ENCODE measurements at regions of chr6 and their contacts with region 1.

Region 1: DNA sequence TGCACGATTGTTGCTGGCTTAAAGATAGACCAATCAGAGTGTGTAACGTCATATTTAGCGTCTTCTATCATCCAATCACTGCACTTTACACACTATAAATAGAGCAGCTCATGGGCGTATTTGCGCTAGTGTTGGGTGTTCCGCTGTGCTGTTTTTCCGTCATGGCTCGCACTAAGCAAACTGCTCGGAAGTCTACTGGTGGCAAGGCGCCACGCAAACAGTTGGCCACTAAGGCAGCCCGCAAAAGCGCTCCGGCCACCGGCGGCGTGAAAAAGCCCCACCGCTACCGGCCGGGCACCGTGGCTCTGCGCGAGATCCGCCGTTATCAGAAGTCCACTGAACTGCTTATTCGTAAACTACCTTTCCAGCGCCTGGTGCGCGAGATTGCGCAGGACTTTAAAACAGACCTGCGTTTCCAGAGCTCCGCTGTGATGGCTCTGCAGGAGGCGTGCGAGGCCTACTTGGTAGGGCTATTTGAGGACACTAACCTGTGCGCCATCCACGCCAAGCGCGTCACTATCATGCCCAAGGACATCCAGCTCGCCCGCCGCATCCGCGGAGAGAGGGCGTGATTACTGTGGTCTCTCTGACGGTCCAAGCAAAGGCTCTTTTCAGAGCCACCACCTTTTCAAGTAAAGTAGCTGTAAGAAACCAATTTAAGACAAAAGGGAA is 57.9 kb downstream of the TRIM38 start:
- DNase-seq: peak; percentile 63 to 94 (median 76)
- ATAC-seq: peak; percentile 49 to 67 (median 62)
- H3K4me3 ChIP-seq: peak overlapping the region; percentile 76 to 81
- H3K4me3 Mint-ChIP-seq: peak overlapping the region; percentile 85 to 99 (median 97)
- H3K27ac ChIP-seq: peak overlapping the region; percentile 93
- H3K27ac Mint-ChIP-seq: peak overlapping the region; percentile 99 to 100
- H3K4me1 ChIP-seq: peaks cover 13 to 37% of the 10 kb centered on the region in 2 experiments
- H3K4me1 Mint-ChIP-seq: peaks cover 30 to 38% (median 33%) of the 10 kb centered on the region in 3 donors
- H3K27me3 ChIP-seq: no peaks in the 10 kb centered on the region
- H3K27me3 Mint-ChIP-seq: no peaks in the 10 kb centered on the region

Region 2: GRCh38 chr6:24689964-24690363 is 1330.5 kb before region 1 on chr6:
- CTCF ChIA-PET with region 1: no interaction called
- POLR2A ChIA-PET with region 1: no interaction called
- DNase-seq: no peak
- ATAC-seq: no peak
- H3K4me3 ChIP-seq: no peak overlapping the region
- H3K4me3 Mint-ChIP-seq: no peak overlapping the region
- H3K27ac ChIP-seq: no peak overlapping the region
- H3K27ac Mint-ChIP-seq: no peak overlapping the region
- H3K4me1 ChIP-seq: peaks cover 0 to 2% of the 10 kb centered on the region in 2 experiments
- H3K4me1 Mint-ChIP-seq: peaks cover 8 to 15% (median 11%) of the 10 kb centered on the region in 3 donors
- H3K27me3 ChIP-seq: no peaks in the 10 kb centered on the region
- H3K27me3 Mint-ChIP-seq: no peaks in the 10 kb centered on the region

Region 3: GRCh38 chr6:25971187-25971811 is 49.2 kb before region 1 on chr6:
- CTCF ChIA-PET with region 1: no interaction called
- POLR2A ChIA-PET with region 1: interaction called in 1 of 2 experiments, 17 read pairs
- DNase-seq: no peak
- ATAC-seq: no peak
- H3K4me3 ChIP-seq: no peak overlapping the region
- H3K4me3 Mint-ChIP-seq: no peak overlapping the region
- H3K27ac ChIP-seq: no peak overlapping the region
- H3K27ac Mint-ChIP-seq: peak overlapping the region; percentile 27 to 39
- H3K4me1 ChIP-seq: peaks cover 2 to 17% of the 10 kb centered on the region in 2 experiments
- H3K4me1 Mint-ChIP-seq: peaks cover 51 to 70% (median 60%) of the 10 kb centered on the region in 3 donors
- H3K27me3 ChIP-seq: no peaks in the 10 kb centered on the region
- H3K27me3 Mint-ChIP-seq: no peaks in the 10 kb centered on the region

Region 4: DNA sequence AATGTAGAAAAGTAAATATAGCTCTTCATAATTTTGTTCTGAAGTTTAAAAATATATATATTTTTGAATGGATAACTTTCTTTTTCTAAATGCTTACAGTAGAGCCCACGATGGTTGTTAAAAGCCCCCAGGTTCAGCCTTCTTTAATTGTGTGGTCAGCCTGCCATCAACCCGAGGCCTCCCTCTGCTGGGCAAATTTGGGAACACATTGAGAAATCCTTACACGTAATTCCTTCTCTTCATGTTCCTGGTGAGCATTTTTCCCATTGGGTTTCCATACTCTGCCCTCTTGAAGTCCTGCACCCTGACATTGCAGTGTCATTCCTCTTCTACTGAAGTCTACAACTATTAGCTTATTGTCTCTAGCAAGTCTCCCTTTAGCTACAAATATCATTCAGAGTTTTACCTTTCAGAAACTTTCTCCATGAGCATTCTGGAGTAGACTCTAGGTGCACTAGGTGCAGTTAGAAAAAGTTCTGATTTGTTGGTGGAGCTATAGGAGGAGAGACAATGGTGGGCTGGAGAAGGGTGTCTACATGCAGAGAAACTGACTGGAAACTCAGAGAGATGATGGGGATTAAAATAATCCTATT is 17.3 kb before region 1 on chr6:
- CTCF ChIA-PET with region 1: interaction called, 6 to 9 read pairs
- POLR2A ChIA-PET with region 1: interaction called, 6 to 10 read pairs
- DNase-seq: peak in 26 of 35 experiments; percentile 11 to 69 (median 34)
- ATAC-seq: peak in 2 of 4 experiments; percentile 30 to 55
- H3K4me3 ChIP-seq: no peak overlapping the region
- H3K4me3 Mint-ChIP-seq: no peak overlapping the region
- H3K27ac ChIP-seq: no peak overlapping the region
- H3K27ac Mint-ChIP-seq: no peak overlapping the region
- H3K4me1 ChIP-seq: peaks cover 0 to 6% of the 10 kb centered on the region in 2 experiments
- H3K4me1 Mint-ChIP-seq: peaks cover 4 to 7% (median 6%) of the 10 kb centered on the region in 3 donors
- H3K27me3 ChIP-seq: no peaks in the 10 kb centered on the region
- H3K27me3 Mint-ChIP-seq: no peaks in the 10 kb centered on the region

Region 5: GRCh38 chr6:26045065-26045927 is 24.8 kb after region 1 on chr6:
- CTCF ChIA-PET with region 1: interaction called, 9 to 76 read pairs
- POLR2A ChIA-PET with region 1: interaction called, 37 to 682 read pairs
- DNase-seq: peak; percentile 45 to 90 (median 78)
- ATAC-seq: peak; percentile 63 to 66 (median 64)
- H3K4me3 ChIP-seq: peak overlapping the region; percentile 77 to 83
- H3K4me3 Mint-ChIP-seq: peak overlapping the region; percentile 84 to 91 (median 90)
- H3K27ac ChIP-seq: peak overlapping the region; percentile 90
- H3K27ac Mint-ChIP-seq: peak overlapping the region; percentile 98
- H3K4me1 ChIP-seq: peaks cover 5 to 26% of the 10 kb centered on the region in 2 experiments
- H3K4me1 Mint-ChIP-seq: peaks cover 15 to 27% (median 26%) of the 10 kb centered on the region in 3 donors
- H3K27me3 ChIP-seq: no peaks in the 10 kb centered on the region
- H3K27me3 Mint-ChIP-seq: no peaks in the 10 kb centered on the region

Measured in T-cell (primary cell).